ENCODE measurements at regions of chr15 and their contacts with region 1.

Region 1: DNA sequence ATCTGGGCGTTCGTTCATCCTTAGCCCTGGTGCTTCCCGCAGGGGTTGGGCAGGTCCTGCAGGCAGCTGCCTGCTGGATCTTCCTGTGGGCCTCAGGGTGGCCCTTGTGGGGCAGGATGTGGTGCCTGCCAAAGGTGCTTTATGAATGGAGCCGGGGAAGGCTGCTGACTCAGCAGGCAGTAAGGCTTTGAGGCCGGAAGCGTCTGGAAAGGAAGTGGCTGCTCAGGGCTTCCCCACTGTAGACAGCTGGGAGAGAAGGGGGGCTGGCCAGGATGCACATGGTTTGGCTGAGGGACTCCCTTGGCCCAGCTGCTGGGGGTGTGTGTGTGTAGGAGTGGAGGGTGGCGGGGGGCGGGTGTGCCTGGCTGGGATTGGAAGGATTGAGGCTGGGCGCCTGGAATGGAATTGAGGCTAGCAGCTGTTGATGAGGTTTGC is 12.9 kb downstream of the CD276 start:
- DNase-seq: peak; percentile 96
- ATAC-seq: peak; percentile 90
- H3K4me3 Mint-ChIP-seq: peak overlapping the region; percentile 14
- H3K27ac Mint-ChIP-seq: peak overlapping the region; percentile 38
- H3K4me1 Mint-ChIP-seq: peaks cover 48% of the 10 kb centered on the region
- H3K27me3 Mint-ChIP-seq: peaks cover 72% of the 10 kb centered on the region

Region 2: GRCh38 chr15:73560501-73561117 is 136.4 kb before region 1 on chr15:
- CTCF ChIA-PET with region 1: interaction called, 45 read pairs
- DNase-seq: no peak
- ATAC-seq: peak; percentile 70
- H3K4me3 Mint-ChIP-seq: no peak overlapping the region
- H3K27ac Mint-ChIP-seq: no peak overlapping the region
- H3K4me1 Mint-ChIP-seq: peaks cover 23% of the 10 kb centered on the region
- H3K27me3 Mint-ChIP-seq: no peaks in the 10 kb centered on the region

Region 3: DNA sequence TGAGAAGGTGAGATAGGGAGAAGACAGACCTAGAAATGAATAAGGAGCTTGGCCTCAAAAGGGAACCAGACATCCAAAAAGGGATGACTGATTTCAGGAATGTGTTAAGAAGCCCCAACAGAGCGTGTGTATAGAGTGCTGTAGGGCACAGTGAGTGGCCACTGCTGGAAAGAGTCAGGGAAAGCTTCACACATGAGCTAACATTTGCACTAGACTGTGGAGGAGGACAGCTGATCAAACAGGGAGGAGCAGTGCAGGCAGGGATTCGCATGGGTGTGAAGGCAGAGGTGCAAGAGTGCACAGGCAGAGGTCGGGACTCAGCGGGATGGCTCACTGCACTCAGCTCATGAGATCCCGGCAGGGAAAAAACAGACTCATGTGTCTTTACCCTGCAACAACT is 125.7 kb before region 1 on chr15:
- CTCF ChIA-PET with region 1: interaction called, 12 read pairs
- DNase-seq: no peak
- ATAC-seq: peak; percentile 43
- H3K4me3 Mint-ChIP-seq: no peak overlapping the region
- H3K27ac Mint-ChIP-seq: peak overlapping the region; percentile 39
- H3K4me1 Mint-ChIP-seq: peaks cover 64% of the 10 kb centered on the region
- H3K27me3 Mint-ChIP-seq: no peaks in the 10 kb centered on the region

Region 4: DNA sequence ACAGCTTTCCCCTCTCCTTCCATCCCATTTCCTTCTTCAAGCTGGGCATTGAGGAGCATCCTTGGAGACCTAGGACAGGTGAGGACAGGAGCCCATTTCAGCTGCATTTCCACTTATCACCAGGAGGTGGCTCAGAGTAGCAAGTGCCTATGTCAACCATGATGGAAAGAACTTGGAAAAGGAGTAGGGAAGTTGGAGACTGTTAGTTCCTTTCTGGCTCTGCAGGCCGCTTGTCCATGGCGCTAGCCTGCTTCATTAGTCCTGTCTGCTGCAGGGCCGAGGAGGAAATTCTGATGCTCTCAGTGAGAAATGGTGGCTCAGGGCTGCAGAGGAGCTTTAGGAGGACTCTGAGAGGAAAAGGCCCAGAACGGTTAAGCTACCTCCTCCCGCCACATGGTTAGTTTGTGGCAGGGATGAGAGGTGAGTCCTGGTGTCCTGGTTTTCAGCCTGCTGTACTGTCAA is 19.9 kb before region 1 on chr15:
- CTCF ChIA-PET with region 1: interaction called, 137 read pairs
- DNase-seq: peak; percentile 56
- ATAC-seq: peak; percentile 61
- H3K4me3 Mint-ChIP-seq: no peak overlapping the region
- H3K27ac Mint-ChIP-seq: no peak overlapping the region
- H3K4me1 Mint-ChIP-seq: peaks cover 28% of the 10 kb centered on the region
- H3K27me3 Mint-ChIP-seq: peaks cover 51% of the 10 kb centered on the region

Region 5: GRCh38 chr15:73683777-73684580 is 13.1 kb before region 1 on chr15 and contains the start of gene CD276:
- CTCF ChIA-PET with region 1: interaction called, 137 read pairs
- DNase-seq: peak; percentile 36
- ATAC-seq: peak; percentile 60
- H3K4me3 Mint-ChIP-seq: peak within 1 kb of the TSS; percentile 39
- H3K27ac Mint-ChIP-seq: no peak within 1 kb of the TSS
- H3K4me1 Mint-ChIP-seq: peaks cover 9% of the 10 kb centered on the region
- H3K27me3 Mint-ChIP-seq: peaks cover 81% of the 10 kb centered on the region
- total RNA-seq, gene CD276: 3.7 TPM in 1 of 2 experiments, not detected in the other

Region 6: GRCh38 chr15:73712088-73712487 is 15.0 kb after region 1 on chr15:
- CTCF ChIA-PET with region 1: no interaction called
- DNase-seq: no peak
- ATAC-seq: no peak
- H3K4me3 Mint-ChIP-seq: no peak overlapping the region
- H3K27ac Mint-ChIP-seq: no peak overlapping the region
- H3K4me1 Mint-ChIP-seq: no peaks in the 10 kb centered on the region
- H3K27me3 Mint-ChIP-seq: peaks cover 11% of the 10 kb centered on the region

Measured in activated CD8-positive, alpha-beta memory T cell treated with anti-CD3 and anti-CD28 coated beads, Interleukin-2, amount 10 ng/mL, durations not matched to agents 7 days and 5 days (primary cell).